GM18951 (cell line): ENCODE measurements at regions of chr20 and their contacts with region 1.

Region 1: GRCh38 chr20:50575847-50576720 is 65.9 kb downstream of the PTPN1 start:
- POLR2A ChIP-seq: no peak

Region 2: GRCh38 chr20:50189681-50190582 is 386.2 kb before region 1 on chr20:
- in situ Hi-C with region 1: loop called (anchors 10 kb)
- POLR2A ChIP-seq: no peak

Region 3: GRCh38 chr20:50478162-50479036 is 97.7 kb before region 1 on chr20:
- in situ Hi-C with region 1: loop called (anchors 10 kb)
- POLR2A ChIP-seq: no peak

Region 4: DNA sequence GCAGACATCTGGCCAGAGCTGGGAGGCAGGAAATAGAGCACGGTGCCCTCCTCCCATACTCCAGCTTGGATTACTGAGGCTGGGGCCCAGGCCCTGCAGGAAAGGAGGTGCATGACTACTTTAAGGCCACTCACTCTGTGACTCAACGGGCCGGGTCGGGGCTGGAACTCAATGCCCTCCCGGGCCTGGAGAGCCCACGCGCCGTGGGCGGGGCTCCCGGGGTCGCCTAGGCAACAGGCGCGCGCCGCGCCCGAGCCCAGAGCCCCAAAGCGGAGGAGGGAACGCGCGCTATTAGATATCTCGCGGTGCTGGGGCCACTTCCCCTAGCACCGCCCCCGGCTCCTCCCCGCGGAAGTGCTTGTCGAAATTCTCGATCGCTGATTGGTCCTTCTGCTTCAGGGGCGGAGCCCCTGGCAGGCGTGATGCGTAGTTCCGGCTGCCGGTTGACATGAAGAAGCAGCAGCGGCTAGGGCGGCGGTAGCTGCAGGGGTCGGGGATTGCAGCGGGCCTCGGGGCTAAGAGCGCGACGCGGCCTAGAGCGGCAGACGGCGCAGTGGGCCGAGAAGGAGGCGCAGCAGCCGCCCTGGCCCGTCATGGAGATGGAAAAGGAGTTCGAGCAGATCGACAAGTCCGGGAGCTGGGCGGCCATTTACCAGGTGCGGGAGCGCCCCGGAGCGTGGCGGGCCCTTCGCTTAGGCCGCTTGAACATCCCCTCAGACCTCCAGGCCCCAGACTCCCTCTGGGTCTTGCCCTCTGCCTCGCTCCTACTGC is 66.0 kb before region 1 on chr20 and contains the start of gene PTPN1:
- in situ Hi-C with region 1: loop called (anchors 10 kb)
- POLR2A ChIP-seq: peak; percentile 99

Region 5: DNA sequence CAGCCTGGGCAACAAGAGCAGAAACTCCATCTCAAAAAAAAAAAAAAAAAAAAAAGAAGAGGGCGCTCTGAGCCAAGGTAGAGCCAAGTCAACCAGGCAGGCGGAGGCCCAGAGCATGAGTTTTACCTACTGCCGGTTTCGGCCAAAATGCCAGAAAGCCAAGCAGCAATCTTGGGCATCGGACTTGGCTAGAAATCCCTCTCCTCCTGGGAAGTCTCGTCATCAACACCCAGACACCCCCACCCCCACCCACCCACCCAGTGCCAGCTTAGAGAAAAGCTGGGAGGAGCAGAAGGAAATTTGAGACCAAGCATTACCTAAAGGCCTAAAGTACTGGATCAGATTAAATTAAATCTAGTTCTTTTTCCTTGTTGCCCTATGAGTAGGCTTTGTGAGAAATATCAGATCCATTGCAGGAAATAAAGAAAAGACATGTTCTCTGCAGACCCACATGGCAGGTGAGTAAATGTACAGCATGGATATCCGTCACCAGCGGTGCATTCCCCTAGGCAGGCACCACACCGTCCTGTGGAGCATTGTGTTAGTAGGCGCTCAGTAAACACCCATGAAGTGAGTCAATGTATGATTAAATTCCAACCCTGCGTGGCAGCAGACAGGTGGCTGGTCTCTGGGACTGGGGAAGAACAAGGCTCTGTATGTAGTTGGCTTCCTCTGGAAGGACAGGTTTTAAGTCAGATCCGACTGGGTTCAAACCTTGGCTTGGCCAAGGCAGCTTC is 94.2 kb after region 1 on chr20:
- in situ Hi-C with region 1: no loop called
- POLR2A ChIP-seq: no peak

Region 6: GRCh38 chr20:50844430-50845100 is 268.5 kb after region 1 on chr20:
- in situ Hi-C with region 1: no loop called
- POLR2A ChIP-seq: peak; percentile 14

Region 7: DNA sequence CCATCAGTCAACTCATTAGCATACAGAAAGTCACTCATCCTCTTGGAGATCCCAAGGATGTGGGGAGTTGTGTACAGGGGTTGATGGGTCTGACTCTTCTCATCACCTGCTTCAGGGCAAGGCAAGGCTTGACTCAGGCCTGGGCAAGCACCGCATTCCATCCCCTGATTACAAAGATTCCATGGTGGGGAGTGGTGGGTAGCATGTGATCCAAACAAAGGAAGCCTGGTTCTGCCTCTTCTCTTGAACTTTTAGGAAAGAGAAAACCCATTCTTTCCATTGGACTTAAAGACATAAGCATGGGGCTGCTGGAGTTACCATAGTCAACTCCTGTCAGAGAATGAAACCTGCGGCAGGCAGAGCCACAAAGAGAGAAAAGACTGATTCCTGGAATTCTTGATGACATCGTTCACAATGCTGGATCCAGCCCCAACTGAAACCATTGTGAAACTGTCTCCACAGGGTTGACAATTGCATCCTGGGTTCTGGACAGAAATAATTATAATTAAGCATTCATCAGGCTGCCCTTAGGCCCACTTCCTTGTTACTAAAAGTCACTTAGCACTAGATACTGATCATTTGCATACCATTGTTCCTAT is 682.6 kb after region 1 on chr20:
- in situ Hi-C with region 1: no loop called
- POLR2A ChIP-seq: no peak